HEK293 (cell line): ENCODE measurements at regions of chr17 and their contacts with region 1.

Region 1: DNA sequence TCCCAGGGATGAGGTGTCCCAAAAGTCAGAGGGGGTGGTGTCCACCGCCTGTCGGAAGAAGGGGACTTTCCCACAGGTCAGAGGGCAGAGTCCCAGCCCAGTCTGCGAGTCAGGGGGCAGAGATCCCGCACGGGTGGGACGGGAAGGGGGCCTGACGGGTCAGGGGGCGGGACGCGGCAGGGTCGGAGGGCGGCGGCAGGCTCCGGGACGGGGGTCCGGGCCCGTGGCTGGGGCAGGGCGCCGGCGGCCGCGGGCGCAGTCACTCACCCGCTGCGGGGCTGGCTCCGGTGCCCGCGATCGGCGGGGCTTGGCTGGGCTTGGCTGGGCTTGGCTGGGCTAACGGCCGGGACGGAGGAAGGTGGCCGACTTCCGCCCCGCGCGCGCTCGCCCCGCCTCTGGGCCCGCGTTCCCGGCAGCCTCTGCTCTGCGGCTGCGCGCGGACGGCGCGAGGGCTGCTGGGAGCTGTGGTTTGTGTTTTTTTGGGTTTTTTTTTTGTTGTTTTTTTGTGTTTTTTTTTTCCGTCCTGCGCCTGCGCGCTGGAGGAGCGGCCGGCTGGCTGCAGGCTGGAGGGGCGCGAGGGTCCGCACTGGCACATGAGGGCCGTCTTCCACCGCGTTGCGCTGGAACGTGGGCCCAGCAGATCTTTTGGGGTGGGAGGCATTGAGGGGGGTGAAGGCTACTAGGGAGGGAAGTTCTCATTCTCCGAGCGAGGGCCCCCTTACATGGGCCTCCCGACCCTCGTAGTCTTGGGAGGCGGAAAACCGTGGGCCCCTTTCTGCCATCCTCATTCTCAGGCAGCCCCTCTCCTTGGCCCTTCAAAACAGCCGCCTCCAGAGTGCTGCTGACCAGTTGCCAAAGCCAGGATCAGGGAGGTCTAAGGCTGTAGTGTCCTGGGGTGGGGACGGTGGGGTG is at the start of gene CANT1:
- H3K4me3 ChIP-seq: peak within 1 kb of the TSS; percentile 93
- H3K27ac ChIP-seq: peak within 1 kb of the TSS; percentile 72
- H3K4me1 ChIP-seq: peaks cover 17% of the 10 kb centered on the region
- CTCF ChIP-seq: no peak

Region 2: GRCh38 chr17:78774956-78775571 is 234.6 kb before region 1 on chr17:
- CTCF ChIA-PET with region 1: no interaction called
- POLR2A ChIA-PET with region 1: no interaction called
- H3K4me3 ChIP-seq: no peak overlapping the region
- H3K27ac ChIP-seq: no peak overlapping the region
- H3K4me1 ChIP-seq: peaks cover 9% of the 10 kb centered on the region
- CTCF ChIP-seq: no peak

Region 3: DNA sequence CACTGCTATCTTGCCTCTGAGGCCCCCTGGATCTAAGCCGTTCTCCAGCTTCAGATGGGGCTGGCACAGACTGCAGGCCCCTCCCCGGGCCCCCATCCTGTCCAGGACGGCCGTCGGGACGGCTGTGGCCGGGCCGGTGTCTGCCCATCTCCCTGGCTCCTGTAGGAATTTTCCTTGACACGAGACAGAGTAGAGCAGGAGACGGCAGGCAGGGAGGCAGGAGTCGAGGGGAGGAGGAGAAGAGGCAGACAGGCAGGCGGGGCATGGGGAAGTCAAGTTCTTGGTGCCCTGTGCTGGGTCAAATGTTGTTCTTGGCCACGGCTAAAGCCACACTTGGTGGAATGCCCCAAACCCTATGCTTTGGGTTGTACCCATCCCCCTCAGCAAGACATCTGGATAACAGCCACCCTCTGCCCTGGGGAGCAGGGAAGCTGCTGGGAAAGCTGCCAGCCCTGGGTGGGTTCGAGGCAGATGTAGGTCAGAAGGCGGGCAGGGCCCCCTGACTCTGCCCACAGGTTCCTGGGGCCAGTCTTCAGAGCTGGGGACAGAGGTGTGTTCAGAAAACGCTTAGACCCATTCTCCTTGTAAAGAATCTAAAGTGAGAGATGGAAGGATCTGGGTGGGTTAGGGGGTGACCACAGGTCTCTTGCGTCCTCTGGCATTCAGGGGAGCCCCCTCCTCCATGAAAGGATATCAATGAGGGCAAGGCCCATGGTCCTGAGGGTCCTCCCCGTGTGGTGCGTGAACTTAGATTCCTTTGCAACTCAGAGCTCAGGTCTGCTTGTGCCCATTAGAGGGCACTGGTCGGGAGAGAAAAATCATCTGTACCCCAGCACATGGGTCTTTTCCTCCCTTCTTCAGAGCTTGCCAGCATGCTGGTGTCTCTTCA is 18.5 kb after region 1 on chr17:
- CTCF ChIA-PET with region 1: interaction called, 7 read pairs
- POLR2A ChIA-PET with region 1: interaction called, 19 read pairs
- H3K4me3 ChIP-seq: no peak overlapping the region
- H3K27ac ChIP-seq: no peak overlapping the region
- H3K4me1 ChIP-seq: peaks cover 26% of the 10 kb centered on the region
- CTCF ChIP-seq: peak; percentile 48